ENCODE measurements at regions of chr10 and their contacts with region 1.

Region 1: DNA sequence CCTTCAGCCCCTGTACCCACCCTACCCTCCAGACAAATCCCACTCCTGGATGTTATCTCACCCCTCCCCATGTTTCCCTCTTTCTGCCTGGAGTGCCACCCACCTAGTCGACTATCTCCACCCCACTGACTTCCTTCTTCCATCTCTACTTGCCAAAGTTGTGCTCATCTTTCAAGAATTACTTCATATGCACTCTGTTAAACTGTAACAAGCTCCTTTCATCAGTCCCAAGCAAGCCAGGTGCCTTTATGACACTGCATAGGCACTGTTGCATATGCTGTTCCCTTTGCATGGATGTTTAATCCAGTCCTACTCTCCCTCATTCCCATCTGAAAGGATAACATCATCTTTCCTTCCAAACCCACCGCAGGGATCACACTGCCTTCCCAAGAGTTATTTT is 8.9 kb upstream of the CDK1 start:
- DNase-seq: no peak
- ATAC-seq: no peak
- H3K4me3 ChIP-seq: no peak overlapping the region
- H3K4me3 Mint-ChIP-seq: no peak overlapping the region
- H3K27ac ChIP-seq: no peak overlapping the region
- H3K27ac Mint-ChIP-seq: no peak overlapping the region
- H3K4me1 ChIP-seq: peaks cover 5% of the 10 kb centered on the region
- H3K4me1 Mint-ChIP-seq: peaks cover 20% of the 10 kb centered on the region
- H3K27me3 ChIP-seq: no peaks in the 10 kb centered on the region
- H3K27me3 Mint-ChIP-seq: no peaks in the 10 kb centered on the region
- CTCF ChIP-seq: no peak

Region 2: DNA sequence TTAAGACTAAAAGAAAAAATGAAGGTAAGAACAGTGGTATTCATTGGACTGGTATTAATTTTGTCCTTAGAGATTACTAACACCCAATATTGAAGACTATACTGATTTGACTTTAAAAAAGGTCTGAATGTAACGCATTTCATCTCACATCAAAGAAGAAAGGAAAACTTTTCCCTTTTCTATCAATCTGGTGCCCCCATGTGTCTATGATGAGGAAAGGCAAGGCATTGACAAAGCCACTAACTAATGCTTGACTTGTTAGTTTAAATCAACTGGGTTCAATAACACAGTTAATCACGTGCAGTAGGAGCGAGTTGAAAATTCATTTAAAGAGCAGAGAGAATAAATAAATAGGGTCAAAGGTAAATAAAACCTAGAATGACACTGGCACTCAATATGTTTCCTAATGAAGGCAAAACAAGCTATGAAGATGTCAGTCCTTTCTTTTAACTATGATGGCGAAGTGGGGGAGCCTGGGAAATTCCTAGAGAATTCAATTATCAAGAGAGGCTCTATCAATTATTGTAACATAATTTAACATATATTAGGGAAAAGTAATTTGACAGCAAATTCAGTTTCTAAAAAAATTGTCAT is 560.6 kb before region 1 on chr10:
- CTCF ChIA-PET with region 1: no interaction called
- POLR2A ChIA-PET with region 1: no interaction called
- intact Hi-C with region 1: loop called (anchors 1 to 2 kb)
- DNase-seq: no peak
- ATAC-seq: no peak
- H3K4me3 ChIP-seq: no peak overlapping the region
- H3K4me3 Mint-ChIP-seq: no peak overlapping the region
- H3K27ac ChIP-seq: no peak overlapping the region
- H3K27ac Mint-ChIP-seq: no peak overlapping the region
- H3K4me1 ChIP-seq: peaks cover 7% of the 10 kb centered on the region
- H3K4me1 Mint-ChIP-seq: peaks cover 31% of the 10 kb centered on the region
- H3K27me3 ChIP-seq: no peaks in the 10 kb centered on the region
- H3K27me3 Mint-ChIP-seq: no peaks in the 10 kb centered on the region
- CTCF ChIP-seq: peak; percentile 27

Region 3: DNA sequence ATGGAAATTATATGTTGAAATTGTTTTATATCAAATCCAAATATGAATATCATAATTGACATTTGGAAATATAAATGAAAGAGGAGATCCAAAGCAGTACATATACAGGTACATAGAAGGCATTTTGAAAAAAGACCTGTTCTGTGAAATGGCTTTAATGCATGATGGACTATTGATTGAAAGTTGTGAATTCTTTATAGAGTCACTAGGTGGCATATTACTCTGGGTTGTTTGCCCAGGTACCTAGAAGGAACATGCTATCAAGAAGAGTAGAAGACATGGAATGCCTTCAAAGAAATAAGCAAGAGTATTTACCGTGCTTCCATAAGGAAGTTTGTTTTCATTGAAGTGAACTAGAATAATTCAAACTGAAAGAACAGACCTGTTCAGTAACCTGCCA is 219.7 kb before region 1 on chr10:
- CTCF ChIA-PET with region 1: no interaction called
- POLR2A ChIA-PET with region 1: no interaction called
- intact Hi-C with region 1: loop called (anchors 2 to 5 kb)
- DNase-seq: peak in 3 of 14 experiments; percentile 17 to 30 (median 29)
- ATAC-seq: no peak
- H3K4me3 ChIP-seq: no peak overlapping the region
- H3K4me3 Mint-ChIP-seq: no peak overlapping the region
- H3K27ac ChIP-seq: no peak overlapping the region
- H3K27ac Mint-ChIP-seq: no peak overlapping the region
- H3K4me1 ChIP-seq: no peaks in the 10 kb centered on the region
- H3K4me1 Mint-ChIP-seq: no peaks in the 10 kb centered on the region
- H3K27me3 ChIP-seq: no peaks in the 10 kb centered on the region
- H3K27me3 Mint-ChIP-seq: no peaks in the 10 kb centered on the region
- CTCF ChIP-seq: peak; percentile 57

Region 4: GRCh38 chr10:60662917-60663614 is 106.3 kb before region 1 on chr10:
- CTCF ChIA-PET with region 1: interaction called, 3 read pairs
- POLR2A ChIA-PET with region 1: no interaction called
- intact Hi-C with region 1: loop called in 1 of 2 experiments (anchors 5 kb)
- DNase-seq: peak in 1 of 14 experiments; percentile 10
- ATAC-seq: no peak
- H3K4me3 ChIP-seq: no peak overlapping the region
- H3K4me3 Mint-ChIP-seq: peak overlapping the region; percentile 59
- H3K27ac ChIP-seq: no peak overlapping the region
- H3K27ac Mint-ChIP-seq: peak overlapping the region; percentile 48
- H3K4me1 ChIP-seq: peaks cover 12% of the 10 kb centered on the region
- H3K4me1 Mint-ChIP-seq: peaks cover 72% of the 10 kb centered on the region
- H3K27me3 ChIP-seq: no peaks in the 10 kb centered on the region
- H3K27me3 Mint-ChIP-seq: no peaks in the 10 kb centered on the region
- CTCF ChIP-seq: no peak

Region 5: GRCh38 chr10:60733189-60733822 is 36.1 kb before region 1 on chr10:
- CTCF ChIA-PET with region 1: interaction called, 3 read pairs
- POLR2A ChIA-PET with region 1: interaction called, 11 read pairs
- intact Hi-C with region 1: loop called in 1 of 2 experiments (anchors 5 kb)
- DNase-seq: peak; percentile 25 to 79 (median 50)
- ATAC-seq: peak; percentile 66
- H3K4me3 ChIP-seq: peak overlapping the region; percentile 70
- H3K4me3 Mint-ChIP-seq: peak overlapping the region; percentile 82
- H3K27ac ChIP-seq: peak overlapping the region; percentile 49 to 83
- H3K27ac Mint-ChIP-seq: peak overlapping the region; percentile 99
- H3K4me1 ChIP-seq: peaks cover 20% of the 10 kb centered on the region
- H3K4me1 Mint-ChIP-seq: peaks cover 49% of the 10 kb centered on the region
- H3K27me3 ChIP-seq: no peaks in the 10 kb centered on the region
- H3K27me3 Mint-ChIP-seq: no peaks in the 10 kb centered on the region
- CTCF ChIP-seq: peak; percentile 57

Region 6: DNA sequence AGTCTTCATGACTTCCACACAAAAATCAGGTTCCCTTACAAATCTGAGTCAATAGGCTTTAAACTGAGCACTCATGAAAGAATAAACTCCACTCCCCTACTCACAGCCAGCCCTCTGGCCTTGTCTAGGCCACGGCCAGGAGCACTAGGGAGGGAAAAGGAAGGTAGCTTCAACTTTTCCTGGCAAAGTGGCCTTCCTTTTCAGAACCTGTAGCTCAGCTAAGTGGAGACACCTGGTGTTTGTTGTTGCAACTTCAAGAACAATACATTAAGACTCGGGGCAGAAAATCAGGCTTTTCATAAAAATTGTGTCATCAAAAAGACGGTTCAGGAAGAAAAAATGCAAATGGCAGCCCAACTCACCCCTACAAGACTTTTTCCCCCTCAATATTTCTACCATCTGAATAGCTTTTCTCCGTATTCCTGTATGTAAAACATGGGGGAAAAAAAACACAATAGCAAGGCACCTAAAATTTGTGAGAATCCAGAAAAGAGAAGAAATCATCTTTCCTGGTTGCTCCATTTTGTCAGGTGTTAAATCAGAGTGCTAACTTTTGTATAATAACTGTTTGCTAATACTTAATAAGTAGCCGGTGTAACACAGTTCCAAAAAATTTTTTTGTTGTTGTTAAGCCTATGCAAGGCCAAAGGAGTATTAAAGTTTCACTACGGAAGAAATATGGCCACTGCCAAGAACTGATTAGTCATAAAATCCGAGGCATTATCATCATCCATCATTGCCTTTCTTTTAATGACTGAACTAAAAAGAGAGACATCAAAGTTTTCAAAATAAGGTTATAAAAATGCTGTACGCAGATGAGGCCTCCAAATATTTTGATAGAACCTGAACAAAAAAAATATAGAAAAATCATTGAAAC is 1065.9 kb after region 1 on chr10:
- CTCF ChIA-PET with region 1: no interaction called
- POLR2A ChIA-PET with region 1: no interaction called
- intact Hi-C with region 1: no loop called
- DNase-seq: peak in 3 of 14 experiments; percentile 41 to 47 (median 41)
- ATAC-seq: no peak
- H3K4me3 ChIP-seq: no peak overlapping the region
- H3K4me3 Mint-ChIP-seq: no peak overlapping the region
- H3K27ac ChIP-seq: no peak overlapping the region
- H3K27ac Mint-ChIP-seq: no peak overlapping the region
- H3K4me1 ChIP-seq: no peaks in the 10 kb centered on the region
- H3K4me1 Mint-ChIP-seq: peaks cover 14% of the 10 kb centered on the region
- H3K27me3 ChIP-seq: no peaks in the 10 kb centered on the region
- H3K27me3 Mint-ChIP-seq: no peaks in the 10 kb centered on the region
- CTCF ChIP-seq: peak; percentile 48